A673 (cell line): ENCODE measurements at regions of chr6 and their contacts with region 1.

Region 1: DNA sequence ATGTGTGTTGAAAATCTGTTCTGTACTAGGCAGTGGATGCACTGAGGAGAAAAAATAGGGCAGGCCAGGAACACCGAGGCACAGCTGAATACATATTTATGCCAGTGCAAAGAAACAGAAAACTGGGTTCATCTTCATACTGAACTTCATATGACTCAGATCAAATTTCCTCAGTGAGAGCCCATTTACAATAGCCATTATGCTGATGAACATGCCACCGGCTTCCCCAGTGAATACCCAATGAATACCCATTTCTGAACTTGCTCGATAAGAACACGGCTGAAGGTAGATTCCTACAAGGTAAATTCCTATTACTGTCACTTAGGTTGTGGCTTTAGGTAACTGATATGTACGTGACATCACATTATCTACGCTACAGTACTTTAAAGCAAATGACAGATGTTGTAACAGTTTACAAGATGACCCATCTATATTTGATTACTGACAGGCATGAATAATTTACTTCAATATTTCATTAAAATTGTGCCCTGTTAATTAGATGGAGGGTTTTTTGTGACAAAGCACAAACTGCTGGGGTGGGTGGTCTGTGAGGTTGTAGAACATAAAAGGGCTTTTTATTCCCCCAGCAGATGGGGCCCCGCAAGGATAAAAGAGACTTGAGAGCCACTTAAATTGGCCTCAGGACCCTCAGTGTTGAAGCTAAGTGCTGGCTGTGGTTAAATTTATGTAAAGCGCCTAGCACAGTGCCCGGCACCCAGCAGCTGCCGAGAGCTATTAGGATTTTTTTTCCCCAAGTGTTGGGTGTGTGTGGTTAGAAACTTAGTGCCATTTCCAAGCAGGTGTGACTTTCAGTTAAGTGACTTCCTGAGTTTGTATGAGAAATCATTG is 264.5 kb downstream of the CD83 start:
- DNase-seq: peak; percentile 54
- H3K4me3 ChIP-seq: peak overlapping the region; percentile 8
- H3K27ac ChIP-seq: peak overlapping the region; percentile 97
- H3K4me1 ChIP-seq: peaks cover 61% of the 10 kb centered on the region
- H3K27me3 ChIP-seq: no peaks in the 10 kb centered on the region
- CTCF ChIP-seq: no peak

Region 2: GRCh38 chr6:14149739-14150130 is 232.3 kb before region 1 on chr6:
- CTCF ChIA-PET with region 1: no interaction called
- POLR2A ChIA-PET with region 1: no interaction called
- intact Hi-C with region 1: loop called (anchors 5 kb)
- DNase-seq: no peak
- H3K4me3 ChIP-seq: no peak overlapping the region
- H3K27ac ChIP-seq: no peak overlapping the region
- H3K4me1 ChIP-seq: peaks cover 44% of the 10 kb centered on the region
- H3K27me3 ChIP-seq: no peaks in the 10 kb centered on the region
- CTCF ChIP-seq: no peak

Region 3: GRCh38 chr6:14476793-14477531 is 94.9 kb after region 1 on chr6:
- CTCF ChIA-PET with region 1: no interaction called
- POLR2A ChIA-PET with region 1: no interaction called
- intact Hi-C with region 1: no loop called
- DNase-seq: no peak
- H3K4me3 ChIP-seq: no peak overlapping the region
- H3K27ac ChIP-seq: no peak overlapping the region
- H3K4me1 ChIP-seq: no peaks in the 10 kb centered on the region
- H3K27me3 ChIP-seq: no peaks in the 10 kb centered on the region
- CTCF ChIP-seq: no peak

Region 4: GRCh38 chr6:14499841-14500240 is 117.8 kb after region 1 on chr6:
- CTCF ChIA-PET with region 1: no interaction called
- POLR2A ChIA-PET with region 1: no interaction called
- intact Hi-C with region 1: loop called (anchors 2 kb)
- DNase-seq: peak; percentile 90
- H3K4me3 ChIP-seq: no peak overlapping the region
- H3K27ac ChIP-seq: peak overlapping the region; percentile 15
- H3K4me1 ChIP-seq: peaks cover 27% of the 10 kb centered on the region
- H3K27me3 ChIP-seq: no peaks in the 10 kb centered on the region
- CTCF ChIP-seq: 0 out of 2 replicates have a peak, but pooled peaks have one; percentile 18

Region 5: GRCh38 chr6:14876778-14877613 is 494.9 kb after region 1 on chr6:
- CTCF ChIA-PET with region 1: no interaction called
- POLR2A ChIA-PET with region 1: no interaction called
- intact Hi-C with region 1: loop called (anchors 2 kb)
- DNase-seq: peak; percentile 98
- H3K4me3 ChIP-seq: peak overlapping the region; percentile 25
- H3K27ac ChIP-seq: peak overlapping the region; percentile 96
- H3K4me1 ChIP-seq: peaks cover 63% of the 10 kb centered on the region
- H3K27me3 ChIP-seq: no peaks in the 10 kb centered on the region
- CTCF ChIP-seq: no peak

Region 6: GRCh38 chr6:15245361-15246216 is 863.5 kb after region 1 on chr6 and contains the start of gene JARID2:
- CTCF ChIA-PET with region 1: no interaction called
- POLR2A ChIA-PET with region 1: no interaction called
- intact Hi-C with region 1: loop called (anchors 5 kb)
- DNase-seq: peak; percentile 99
- H3K4me3 ChIP-seq: peak within 1 kb of the TSS; percentile 71
- H3K27ac ChIP-seq: peak within 1 kb of the TSS; percentile 96
- H3K4me1 ChIP-seq: peaks cover 18% of the 10 kb centered on the region
- H3K27me3 ChIP-seq: no peaks in the 10 kb centered on the region
- CTCF ChIP-seq: no peak
- total RNA-seq, gene JARID2: 29.4 and 34.1 TPM in 2 replicates